Upper lobe of right lung (tissue), 1 donor: ENCODE measurements at regions of chr5 and their contacts with region 1.

Region 1: GRCh38 chr5:76771705-76772405 is 47.0 kb upstream of the F2RL1 start:
- DNase-seq: no peak
- ATAC-seq: no peak
- H3K4me3 ChIP-seq: no peak overlapping the region
- H3K27ac ChIP-seq: no peak overlapping the region
- H3K4me1 ChIP-seq: peaks cover 6% of the 10 kb centered on the region
- H3K27me3 ChIP-seq: no peaks in the 10 kb centered on the region
- CTCF ChIP-seq: no peak

Region 2: DNA sequence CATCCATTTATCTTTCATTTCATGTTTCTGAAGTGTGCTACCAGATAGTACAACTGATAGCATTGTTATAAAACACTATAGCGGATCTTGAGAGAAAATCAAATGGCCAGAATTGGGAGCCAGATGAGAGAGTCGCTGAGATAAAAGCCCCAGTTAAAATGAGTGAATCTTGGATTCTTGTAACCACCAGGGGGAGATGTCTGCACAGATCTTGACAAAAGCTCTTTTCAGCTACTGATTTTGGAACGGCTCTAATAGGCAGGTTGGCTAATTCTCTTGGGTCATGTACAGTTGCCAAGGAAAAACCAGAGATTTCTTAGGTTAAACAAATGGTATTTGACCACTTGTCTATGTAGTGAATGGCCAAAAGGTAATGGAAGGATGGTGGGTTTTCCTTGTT is 170.4 kb before region 1 on chr5:
- intact Hi-C with region 1: loop called (anchors 10 kb)
- DNase-seq: no peak
- ATAC-seq: peak; percentile 81
- H3K4me3 ChIP-seq: no peak overlapping the region
- H3K27ac ChIP-seq: no peak overlapping the region
- H3K4me1 ChIP-seq: no peaks in the 10 kb centered on the region
- H3K27me3 ChIP-seq: no peaks in the 10 kb centered on the region
- CTCF ChIP-seq: peak; percentile 75

Region 3: DNA sequence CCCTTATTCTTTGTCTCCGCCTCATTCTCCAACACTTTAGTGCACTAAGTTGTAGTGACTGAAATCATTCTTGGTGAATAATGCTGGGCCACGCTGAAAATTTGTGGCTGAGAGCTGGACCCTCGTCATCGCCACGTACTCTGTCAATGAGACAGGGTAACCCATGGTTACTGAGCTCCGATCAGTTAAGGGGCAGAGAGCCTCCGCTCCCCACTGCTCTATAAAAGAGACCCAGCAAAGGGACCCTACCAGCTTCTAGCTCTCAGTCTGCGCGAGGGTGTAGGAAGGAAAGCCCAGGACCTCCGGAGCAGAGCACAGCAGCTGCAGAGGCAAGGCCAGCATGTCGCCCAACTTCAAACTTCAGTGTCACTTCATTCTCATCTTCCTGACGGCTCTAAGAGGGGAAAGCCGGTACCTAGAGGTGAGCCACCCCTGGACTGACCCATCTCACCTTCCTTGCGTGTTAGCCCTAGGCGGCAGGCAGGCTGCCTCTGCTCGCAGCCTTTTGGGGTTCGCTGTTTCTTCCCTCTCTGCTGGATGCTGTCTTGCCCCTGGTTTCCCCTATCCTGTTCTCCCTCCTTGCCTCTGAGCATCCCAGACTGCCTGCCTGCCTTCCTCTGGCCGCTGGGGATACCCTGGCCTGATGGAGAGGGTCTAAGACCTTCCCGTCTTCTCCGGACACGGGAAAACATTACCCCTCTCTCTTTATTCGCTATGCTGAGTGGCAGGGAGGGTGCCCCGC is 181.1 kb after region 1 on chr5 and contains the start of gene CRHBP:
- intact Hi-C with region 1: no loop called
- DNase-seq: no peak
- ATAC-seq: peak; percentile 13
- H3K4me3 ChIP-seq: peak within 1 kb of the TSS; percentile 30
- H3K27ac ChIP-seq: no peak within 1 kb of the TSS
- H3K4me1 ChIP-seq: peaks cover 10% of the 10 kb centered on the region
- H3K27me3 ChIP-seq: peaks cover 38% of the 10 kb centered on the region
- CTCF ChIP-seq: no peak
- total RNA-seq, gene CRHBP: 0.26 TPM